ENCODE measurements at regions of chr7 and their contacts with region 1.

Region 1: DNA sequence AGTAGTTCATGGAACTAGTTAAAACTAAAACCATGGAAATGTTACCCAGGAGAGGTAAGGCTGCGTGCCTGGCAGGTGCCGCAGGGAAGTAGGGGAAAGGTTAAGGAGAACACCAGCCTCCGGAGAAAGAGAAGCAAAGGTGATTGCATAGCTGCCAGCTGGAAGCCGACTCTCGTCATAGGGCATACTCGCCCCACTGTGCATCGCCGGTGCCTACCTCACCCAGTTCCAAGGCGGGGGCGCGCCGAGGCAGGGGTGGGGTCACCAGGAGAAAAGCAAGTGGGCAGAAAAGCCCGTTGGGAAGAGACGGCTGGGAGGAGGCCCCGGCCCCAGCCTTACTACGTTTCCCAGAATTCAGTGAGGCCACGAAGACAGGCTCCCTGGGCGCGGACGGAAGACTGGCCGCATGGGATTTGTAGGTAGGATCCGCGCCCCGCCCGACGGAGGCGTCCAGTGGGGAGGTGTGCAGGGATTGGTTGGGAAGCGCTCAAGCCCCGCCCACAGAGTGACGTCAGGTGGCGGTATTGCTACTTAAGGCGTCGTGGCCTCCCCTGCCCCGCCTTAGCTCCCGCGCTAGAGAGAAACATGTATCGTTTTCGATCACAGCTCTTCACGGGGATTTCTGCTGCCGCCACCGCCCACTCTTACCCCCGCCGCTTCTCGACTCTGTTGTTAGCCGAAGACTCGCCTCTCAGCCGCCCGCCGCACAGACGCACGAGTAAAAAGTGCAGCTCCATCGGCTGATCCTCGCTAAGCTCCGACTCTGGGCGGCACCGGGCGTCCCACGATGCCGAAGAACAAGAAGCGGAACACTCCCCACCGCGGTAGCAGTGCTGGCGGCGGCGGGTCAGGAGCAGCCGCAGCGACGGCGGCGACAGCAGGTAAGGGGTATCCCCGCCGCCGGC is at the start of gene IFRD1:
- DNase-seq: peak; percentile 99
- ATAC-seq: peak; percentile 83 to 89 (median 84)
- H3K4me3 ChIP-seq: peak within 1 kb of the TSS; percentile 97
- H3K27ac ChIP-seq: peak within 1 kb of the TSS; percentile 100
- H3K4me1 ChIP-seq: peaks cover 27% of the 10 kb centered on the region
- H3K27me3 ChIP-seq: no peaks in the 10 kb centered on the region
- CTCF ChIP-seq: no peak
- total RNA-seq, gene IFRD1: 43.7 to 163 (median 54.0) TPM

Region 2: GRCh38 chr7:112481833-112482670 is 31.9 kb after region 1 on chr7:
- intact Hi-C with region 1: loop called in 1 of 2 experiments (anchors 2 kb)
- DNase-seq: peak; percentile 48 to 82
- ATAC-seq: peak; percentile 85 to 91 (median 86)
- H3K4me3 ChIP-seq: peak overlapping the region; percentile 55
- H3K27ac ChIP-seq: peak overlapping the region; percentile 92
- H3K4me1 ChIP-seq: peaks cover 51% of the 10 kb centered on the region
- H3K27me3 ChIP-seq: no peaks in the 10 kb centered on the region
- CTCF ChIP-seq: no peak

Region 3: DNA sequence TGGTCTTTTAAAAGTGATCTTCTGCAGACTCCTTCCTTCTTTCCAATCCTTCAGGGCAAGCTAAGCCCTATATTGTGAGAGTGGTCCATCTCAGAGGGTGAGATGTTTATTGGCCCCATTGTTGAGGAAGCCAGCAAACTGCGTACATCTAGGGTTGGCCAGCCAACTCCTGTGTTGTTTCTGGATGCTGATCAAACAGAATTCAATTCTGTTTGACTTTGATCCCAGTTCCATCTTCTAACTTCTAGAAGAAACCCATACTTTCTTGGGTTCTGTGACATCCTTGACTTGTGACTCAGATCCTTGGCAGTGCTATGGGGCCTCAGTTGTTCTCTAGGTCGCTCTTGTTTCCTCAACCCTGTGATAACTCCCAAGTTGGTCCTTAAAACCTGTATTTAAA is 146.8 kb after region 1 on chr7:
- intact Hi-C with region 1: no loop called
- DNase-seq: no peak
- ATAC-seq: no peak
- H3K4me3 ChIP-seq: no peak overlapping the region
- H3K27ac ChIP-seq: no peak overlapping the region
- H3K4me1 ChIP-seq: no peaks in the 10 kb centered on the region
- H3K27me3 ChIP-seq: no peaks in the 10 kb centered on the region
- CTCF ChIP-seq: no peak